ENCODE measurements at regions of chr6 and their contacts with region 1.

Region 1: DNA sequence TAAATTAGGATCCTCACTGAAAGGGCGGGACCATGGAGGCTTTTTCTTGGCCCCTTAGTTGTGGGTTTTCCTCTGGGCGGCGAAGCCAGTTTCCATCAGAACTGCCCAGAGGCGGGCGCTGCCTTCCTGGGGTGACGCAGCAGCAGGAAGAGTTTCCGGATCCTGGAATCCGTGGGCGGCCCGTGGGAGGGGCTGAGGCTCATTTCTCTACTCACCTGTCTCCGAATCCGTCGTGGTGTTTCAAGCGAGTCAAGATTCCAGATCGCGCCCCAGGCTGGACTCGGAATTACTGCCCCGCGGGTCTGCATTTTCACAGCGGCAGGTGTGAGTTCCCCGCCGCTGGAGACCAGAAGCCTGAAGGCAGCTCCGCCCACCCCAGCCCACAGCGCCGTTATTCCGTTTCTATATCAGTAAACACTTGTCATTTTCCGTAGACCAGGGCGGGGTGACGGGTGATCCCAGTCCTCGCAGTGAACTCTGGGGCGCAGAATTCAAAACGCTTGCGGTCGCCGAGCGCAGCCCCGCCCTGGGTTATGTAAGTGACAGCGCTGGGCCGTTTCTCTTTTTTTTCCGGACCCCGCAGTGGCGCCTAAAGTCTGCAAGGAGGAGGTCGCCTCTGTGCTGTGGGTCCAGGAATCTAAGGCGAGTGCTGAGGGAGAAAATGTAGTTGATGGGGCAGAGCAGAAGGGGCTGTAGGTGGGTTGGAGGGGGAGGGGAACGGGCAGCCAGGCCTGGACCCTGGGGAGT is 27.2 kb upstream of the POU5F1 start:
- DNase-seq: peak; percentile 97
- ATAC-seq: peak; percentile 69
- H3K4me3 Mint-ChIP-seq: peak overlapping the region; percentile 76
- H3K27ac Mint-ChIP-seq: peak overlapping the region; percentile 80
- H3K4me1 Mint-ChIP-seq: peaks cover 50% of the 10 kb centered on the region
- H3K27me3 Mint-ChIP-seq: no peaks in the 10 kb centered on the region

Region 2: GRCh38 chr6:31139599-31139998 is 58.1 kb before region 1 on chr6:
- CTCF ChIA-PET with region 1: interaction called, 12 read pairs
- POLR2A ChIA-PET with region 1: no interaction called
- intact Hi-C with region 1: loop called (anchors 1 kb)
- DNase-seq: no peak
- ATAC-seq: no peak
- H3K4me3 Mint-ChIP-seq: no peak overlapping the region
- H3K27ac Mint-ChIP-seq: no peak overlapping the region
- H3K4me1 Mint-ChIP-seq: peaks cover 6% of the 10 kb centered on the region
- H3K27me3 Mint-ChIP-seq: no peaks in the 10 kb centered on the region

Region 3: DNA sequence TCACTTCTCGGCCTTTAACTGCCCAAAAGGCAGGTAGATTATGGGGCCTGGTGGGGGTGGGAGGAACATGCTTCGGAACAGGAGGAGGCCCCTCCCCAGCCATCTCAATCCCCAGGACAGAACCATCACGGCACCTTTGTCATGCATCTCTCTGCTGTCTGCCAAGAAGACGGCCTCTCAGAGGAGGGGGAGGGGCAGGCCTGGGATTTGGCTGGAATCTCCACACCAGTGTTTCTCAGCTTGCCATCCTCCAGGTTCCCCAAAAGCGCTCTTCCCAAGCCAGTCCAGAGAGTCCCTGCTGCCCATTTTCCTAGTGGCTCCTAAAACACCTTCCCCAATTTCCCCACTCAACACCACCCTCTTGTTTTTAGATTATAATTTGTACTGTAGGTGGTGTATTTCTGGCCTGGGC is 24.8 kb before region 1 on chr6:
- CTCF ChIA-PET with region 1: no interaction called
- POLR2A ChIA-PET with region 1: no interaction called
- intact Hi-C with region 1: no loop called
- DNase-seq: no peak
- ATAC-seq: no peak
- H3K4me3 Mint-ChIP-seq: no peak overlapping the region
- H3K27ac Mint-ChIP-seq: no peak overlapping the region
- H3K4me1 Mint-ChIP-seq: peaks cover under 1% of the 10 kb centered on the region
- H3K27me3 Mint-ChIP-seq: no peaks in the 10 kb centered on the region

Region 4: GRCh38 chr6:31332637-31333602 is 135.2 kb after region 1 on chr6:
- CTCF ChIA-PET with region 1: interaction called, 4 read pairs
- POLR2A ChIA-PET with region 1: no interaction called
- intact Hi-C with region 1: loop called (anchors 1 kb)
- DNase-seq: peak; percentile 64
- ATAC-seq: peak; percentile 91
- H3K4me3 Mint-ChIP-seq: peak overlapping the region; percentile 48
- H3K27ac Mint-ChIP-seq: peak overlapping the region; percentile 73
- H3K4me1 Mint-ChIP-seq: peaks cover 19% of the 10 kb centered on the region
- H3K27me3 Mint-ChIP-seq: no peaks in the 10 kb centered on the region

Region 5: GRCh38 chr6:31366693-31367470 is 169.2 kb after region 1 on chr6:
- CTCF ChIA-PET with region 1: interaction called, 33 read pairs
- POLR2A ChIA-PET with region 1: interaction called, 5 read pairs
- intact Hi-C with region 1: loop called (anchors 1 kb)
- DNase-seq: peak; percentile 88
- ATAC-seq: peak; percentile 96
- H3K4me3 Mint-ChIP-seq: peak overlapping the region; percentile 73
- H3K27ac Mint-ChIP-seq: peak overlapping the region; percentile 49
- H3K4me1 Mint-ChIP-seq: peaks cover 21% of the 10 kb centered on the region
- H3K27me3 Mint-ChIP-seq: peaks cover 22% of the 10 kb centered on the region

Region 6: DNA sequence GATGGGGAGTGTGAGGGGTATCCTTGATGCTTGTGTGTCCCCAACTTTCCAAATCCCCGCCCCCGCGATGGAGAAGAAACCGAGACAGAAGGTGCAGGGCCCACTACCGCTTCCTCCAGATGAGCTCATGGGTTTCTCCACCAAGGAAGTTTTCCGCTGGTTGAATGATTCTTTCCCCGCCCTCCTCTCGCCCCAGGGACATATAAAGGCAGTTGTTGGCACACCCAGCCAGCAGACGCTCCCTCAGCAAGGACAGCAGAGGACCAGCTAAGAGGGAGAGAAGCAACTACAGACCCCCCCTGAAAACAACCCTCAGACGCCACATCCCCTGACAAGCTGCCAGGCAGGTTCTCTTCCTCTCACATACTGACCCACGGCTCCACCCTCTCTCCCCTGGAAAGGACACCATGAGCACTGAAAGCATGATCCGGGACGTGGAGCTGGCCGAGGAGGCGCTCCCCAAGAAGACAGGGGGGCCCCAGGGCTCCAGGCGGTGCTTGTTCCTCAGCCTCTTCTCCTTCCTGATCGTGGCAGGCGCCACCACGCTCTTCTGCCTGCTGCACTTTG is 377.7 kb after region 1 on chr6 and contains the start of gene TNF:
- CTCF ChIA-PET with region 1: no interaction called
- POLR2A ChIA-PET with region 1: interaction called, 3 read pairs
- intact Hi-C with region 1: loop called in 1 of 2 experiments (anchors 5 kb)
- DNase-seq: peak; percentile 89
- ATAC-seq: peak; percentile 23
- H3K4me3 Mint-ChIP-seq: peak within 1 kb of the TSS; percentile 97
- H3K27ac Mint-ChIP-seq: peak within 1 kb of the TSS; percentile 98
- H3K4me1 Mint-ChIP-seq: peaks cover 73% of the 10 kb centered on the region
- H3K27me3 Mint-ChIP-seq: no peaks in the 10 kb centered on the region
- total RNA-seq, gene TNF: 82.3 to 93.3 TPM

Measured in activated CD4-positive, alpha-beta T cell treated with anti-CD3 and anti-CD28 coated beads for 36 hours (primary cell).